B cell (primary cell): ENCODE measurements at regions of chr3 and their contacts with region 1.

Region 1: DNA sequence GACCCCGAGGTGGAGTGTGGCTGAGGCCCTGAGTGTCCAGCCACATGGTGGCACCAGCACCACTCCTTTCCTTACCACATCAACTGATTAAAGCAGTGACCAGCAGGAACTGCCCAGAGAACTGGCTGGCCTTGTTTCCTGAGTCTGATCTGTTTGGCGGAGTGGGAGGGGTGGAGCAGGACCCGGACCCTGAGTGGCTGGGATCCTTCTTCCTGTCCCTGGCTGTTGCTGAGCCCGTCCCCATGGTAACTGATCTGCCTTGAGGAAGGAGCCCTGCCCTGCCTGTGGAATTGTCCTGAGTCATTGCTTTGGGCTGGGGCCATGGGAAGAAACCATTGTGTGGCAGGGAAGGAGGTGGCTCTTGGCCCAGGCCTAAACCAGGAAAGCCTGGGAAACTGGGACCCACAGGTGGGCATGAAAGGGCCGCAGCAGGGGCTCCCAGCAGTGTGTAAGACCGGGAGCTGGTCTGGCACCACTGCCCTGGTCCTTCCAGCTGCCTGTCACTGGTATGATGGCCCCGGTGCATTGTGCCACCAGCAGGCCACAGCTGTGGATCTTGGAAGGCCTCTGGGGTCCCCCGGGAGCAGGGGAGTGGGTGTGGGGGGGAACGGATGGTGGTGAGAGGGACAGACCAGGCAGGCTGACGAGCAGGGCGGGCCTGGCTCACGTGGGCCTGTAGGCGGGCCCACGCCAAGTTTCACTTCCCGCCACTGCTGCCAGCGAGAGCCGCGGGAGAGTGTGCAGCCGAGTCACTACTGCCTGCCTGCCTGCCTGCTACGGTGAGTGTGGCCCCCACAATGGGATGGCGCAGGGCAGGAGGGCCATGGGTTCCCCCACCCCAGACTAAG is 19.2 kb downstream of the ATRIP start:
- DNase-seq: peak; percentile 91
- ATAC-seq: peak; percentile 93
- H3K4me3 ChIP-seq: peak overlapping the region; percentile 31 to 92 (median 88)
- H3K4me3 Mint-ChIP-seq: peak overlapping the region; percentile 94
- H3K27ac ChIP-seq: peak overlapping the region; percentile 96 to 99
- H3K27ac Mint-ChIP-seq: peak overlapping the region; percentile 94
- H3K4me1 ChIP-seq: peaks cover 50 to 53% of the 10 kb centered on the region in 2 donors
- H3K4me1 Mint-ChIP-seq: peaks cover 52% of the 10 kb centered on the region
- H3K27me3 ChIP-seq: no peaks in the 10 kb centered on the region
- H3K27me3 Mint-ChIP-seq: no peaks in the 10 kb centered on the region
- CTCF ChIP-seq: peak; percentile 24

Region 2: GRCh38 chr3:48446425-48447193 is 19.1 kb before region 1 on chr3 and contains the start of gene ATRIP:
- CTCF ChIA-PET with region 1: interaction called, 11 read pairs
- POLR2A ChIA-PET with region 1: interaction called, 12 read pairs
- intact Hi-C with region 1: loop called (anchors 1 kb)
- DNase-seq: peak; percentile 89
- ATAC-seq: peak; percentile 99
- H3K4me3 ChIP-seq: peak within 1 kb of the TSS; percentile 50 to 82 (median 73)
- H3K4me3 Mint-ChIP-seq: peak within 1 kb of the TSS; percentile 91
- H3K27ac ChIP-seq: peak within 1 kb of the TSS; percentile 37 to 69
- H3K27ac Mint-ChIP-seq: peak within 1 kb of the TSS; percentile 91
- H3K4me1 ChIP-seq: peaks cover 20 to 27% of the 10 kb centered on the region in 2 donors
- H3K4me1 Mint-ChIP-seq: peaks cover 37% of the 10 kb centered on the region
- H3K27me3 ChIP-seq: no peaks in the 10 kb centered on the region
- H3K27me3 Mint-ChIP-seq: no peaks in the 10 kb centered on the region
- CTCF ChIP-seq: no peak
- total RNA-seq, gene ATRIP: 11.6 and 14.3 TPM in 2 replicates

Region 3: DNA sequence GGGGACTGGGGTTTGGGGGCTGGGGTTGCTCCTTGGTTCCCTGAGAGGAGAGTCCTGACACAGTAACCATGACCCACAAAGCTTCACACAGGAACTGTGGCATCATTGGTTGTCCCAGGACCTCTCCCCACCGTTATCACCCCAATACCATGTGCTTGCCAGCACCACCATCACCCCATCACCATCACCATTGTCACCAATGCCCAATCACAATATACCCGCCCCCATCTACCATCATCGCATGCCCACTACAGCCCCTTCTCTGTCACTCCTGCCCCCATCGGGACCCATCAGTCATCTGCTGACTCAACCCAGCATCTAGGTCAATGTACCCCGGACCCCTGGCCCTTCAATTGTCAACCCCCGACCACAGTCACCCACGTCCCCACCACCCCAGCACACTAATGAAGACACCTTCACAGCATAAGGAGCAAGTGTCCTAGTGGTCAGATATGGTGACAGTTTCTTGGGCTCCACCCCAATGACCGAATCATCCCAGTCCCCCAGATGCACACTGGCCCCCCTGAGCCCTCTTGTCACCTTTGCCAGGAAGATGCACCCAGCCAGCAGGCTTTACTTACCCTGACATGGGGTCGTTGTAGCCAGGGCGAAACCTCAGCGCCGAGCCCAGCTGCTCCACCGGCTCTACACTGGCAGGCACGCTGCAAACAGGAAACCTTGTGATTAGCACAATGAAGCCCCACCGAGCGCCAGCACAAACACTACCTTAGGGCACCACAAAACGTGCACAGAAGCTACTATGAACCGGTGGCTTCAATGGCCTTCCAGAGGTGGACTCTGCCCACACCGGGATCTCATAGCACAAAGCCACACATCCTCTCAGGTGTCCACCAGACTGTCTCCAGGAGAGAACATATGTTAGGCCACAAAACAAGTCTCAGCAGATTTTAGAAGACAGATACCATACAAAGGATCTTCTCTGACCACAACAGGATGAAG is 13.1 kb after region 1 on chr3:
- CTCF ChIA-PET with region 1: interaction called, 12 read pairs
- POLR2A ChIA-PET with region 1: interaction called, 9 read pairs
- intact Hi-C with region 1: no loop called
- DNase-seq: peak; percentile 72
- ATAC-seq: peak; percentile 78
- H3K4me3 ChIP-seq: peak overlapping the region in 4 of 5 experiments; percentile 37 to 52 (median 44)
- H3K4me3 Mint-ChIP-seq: peak overlapping the region; percentile 86
- H3K27ac ChIP-seq: peak overlapping the region; percentile 85 to 89
- H3K27ac Mint-ChIP-seq: peak overlapping the region; percentile 99
- H3K4me1 ChIP-seq: peaks cover 38 to 45% of the 10 kb centered on the region in 2 donors
- H3K4me1 Mint-ChIP-seq: peaks cover 45% of the 10 kb centered on the region
- H3K27me3 ChIP-seq: no peaks in the 10 kb centered on the region
- H3K27me3 Mint-ChIP-seq: no peaks in the 10 kb centered on the region
- CTCF ChIP-seq: no peak

Region 4: GRCh38 chr3:48492543-48493501 is 27.1 kb after region 1 on chr3:
- CTCF ChIA-PET with region 1: interaction called, 3 read pairs
- POLR2A ChIA-PET with region 1: interaction called, 11 read pairs
- intact Hi-C with region 1: no loop called
- DNase-seq: no peak
- ATAC-seq: peak; percentile 95
- H3K4me3 ChIP-seq: no peak overlapping the region
- H3K4me3 Mint-ChIP-seq: peak overlapping the region; percentile 14
- H3K27ac ChIP-seq: no peak overlapping the region
- H3K27ac Mint-ChIP-seq: peak overlapping the region; percentile 22
- H3K4me1 ChIP-seq: peaks cover 0 to 12% of the 10 kb centered on the region in 2 donors
- H3K4me1 Mint-ChIP-seq: peaks cover 15% of the 10 kb centered on the region
- H3K27me3 ChIP-seq: no peaks in the 10 kb centered on the region
- H3K27me3 Mint-ChIP-seq: no peaks in the 10 kb centered on the region
- CTCF ChIP-seq: no peak

Region 5: DNA sequence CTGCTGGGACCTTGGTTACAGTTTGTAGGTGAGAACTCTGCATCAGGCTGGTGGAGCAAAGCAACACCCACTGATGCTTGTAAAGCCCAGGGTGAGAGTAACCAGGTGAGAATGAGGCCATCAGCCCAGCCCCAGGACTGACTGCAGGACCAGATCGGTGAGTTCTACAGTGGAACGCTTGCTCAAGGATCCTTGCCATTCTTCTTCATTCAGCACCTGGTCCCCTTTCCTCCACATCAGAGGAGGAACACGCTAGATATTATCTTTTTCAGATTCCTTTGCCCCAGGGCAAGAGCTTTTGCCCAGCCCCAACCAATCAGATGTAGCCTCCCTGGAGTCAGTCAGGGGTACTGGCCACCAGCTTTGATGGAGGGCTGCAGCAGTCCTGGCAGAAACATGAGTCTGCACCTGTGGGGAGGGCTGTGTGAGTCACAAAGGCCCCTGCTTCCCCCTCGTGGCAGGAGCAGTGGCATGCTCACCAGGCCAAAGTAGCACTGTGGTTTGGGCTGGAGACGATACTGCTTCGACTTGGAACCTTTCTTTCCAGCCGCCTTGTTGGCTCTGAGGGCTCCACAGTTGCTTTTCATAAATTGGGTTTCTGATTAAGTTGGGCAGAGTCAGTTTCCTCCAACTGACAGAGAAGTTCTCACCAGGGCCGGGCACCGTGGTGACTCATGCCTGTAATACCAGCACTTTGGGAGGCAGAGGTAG is 41.8 kb after region 1 on chr3:
- CTCF ChIA-PET with region 1: interaction called, 240 read pairs
- POLR2A ChIA-PET with region 1: interaction called, 20 read pairs
- intact Hi-C with region 1: no loop called
- DNase-seq: peak; percentile 83
- ATAC-seq: peak; percentile 87
- H3K4me3 ChIP-seq: no peak overlapping the region
- H3K4me3 Mint-ChIP-seq: peak overlapping the region; percentile 32
- H3K27ac ChIP-seq: no peak overlapping the region
- H3K27ac Mint-ChIP-seq: peak overlapping the region; percentile 65
- H3K4me1 ChIP-seq: peaks cover 14 to 25% of the 10 kb centered on the region in 2 donors
- H3K4me1 Mint-ChIP-seq: peaks cover 23% of the 10 kb centered on the region
- H3K27me3 ChIP-seq: peaks cover 0 to 2% (median 0%) of the 10 kb centered on the region in 4 experiments
- H3K27me3 Mint-ChIP-seq: peaks cover 3% of the 10 kb centered on the region
- CTCF ChIP-seq: peak; percentile 84

Region 6: GRCh38 chr3:48548729-48549705 is 83.3 kb after region 1 on chr3:
- CTCF ChIA-PET with region 1: interaction called, 21 read pairs
- POLR2A ChIA-PET with region 1: no interaction called
- intact Hi-C with region 1: loop called (anchors 1 kb)
- DNase-seq: peak; percentile 81
- ATAC-seq: peak; percentile 97
- H3K4me3 ChIP-seq: no peak overlapping the region
- H3K4me3 Mint-ChIP-seq: no peak overlapping the region
- H3K27ac ChIP-seq: no peak overlapping the region
- H3K27ac Mint-ChIP-seq: no peak overlapping the region
- H3K4me1 ChIP-seq: peaks cover 0 to 2% of the 10 kb centered on the region in 2 donors
- H3K4me1 Mint-ChIP-seq: no peaks in the 10 kb centered on the region
- H3K27me3 ChIP-seq: no peaks in the 10 kb centered on the region
- H3K27me3 Mint-ChIP-seq: no peaks in the 10 kb centered on the region
- CTCF ChIP-seq: peak; percentile 85

Region 7: GRCh38 chr3:48685602-48686511 is 220.1 kb after region 1 on chr3 and contains the start of gene NCKIPSD:
- CTCF ChIA-PET with region 1: no interaction called
- POLR2A ChIA-PET with region 1: no interaction called
- intact Hi-C with region 1: loop called (anchors 10 kb)
- DNase-seq: peak; percentile 96
- ATAC-seq: peak; percentile 91
- H3K4me3 ChIP-seq: peak within 1 kb of the TSS in 4 of 5 experiments; percentile 58 to 75 (median 70)
- H3K4me3 Mint-ChIP-seq: peak within 1 kb of the TSS; percentile 89
- H3K27ac ChIP-seq: peak within 1 kb of the TSS; percentile 40 to 68
- H3K27ac Mint-ChIP-seq: peak within 1 kb of the TSS; percentile 92
- H3K4me1 ChIP-seq: peaks cover 10 to 25% of the 10 kb centered on the region in 2 donors
- H3K4me1 Mint-ChIP-seq: peaks cover 22% of the 10 kb centered on the region
- H3K27me3 ChIP-seq: no peaks in the 10 kb centered on the region
- H3K27me3 Mint-ChIP-seq: no peaks in the 10 kb centered on the region
- CTCF ChIP-seq: peak; percentile 91
- total RNA-seq, gene NCKIPSD: 19.1 and 19.7 TPM in 2 replicates